ENCODE measurements at regions of chr5 and their contacts with region 1.

Region 1: DNA sequence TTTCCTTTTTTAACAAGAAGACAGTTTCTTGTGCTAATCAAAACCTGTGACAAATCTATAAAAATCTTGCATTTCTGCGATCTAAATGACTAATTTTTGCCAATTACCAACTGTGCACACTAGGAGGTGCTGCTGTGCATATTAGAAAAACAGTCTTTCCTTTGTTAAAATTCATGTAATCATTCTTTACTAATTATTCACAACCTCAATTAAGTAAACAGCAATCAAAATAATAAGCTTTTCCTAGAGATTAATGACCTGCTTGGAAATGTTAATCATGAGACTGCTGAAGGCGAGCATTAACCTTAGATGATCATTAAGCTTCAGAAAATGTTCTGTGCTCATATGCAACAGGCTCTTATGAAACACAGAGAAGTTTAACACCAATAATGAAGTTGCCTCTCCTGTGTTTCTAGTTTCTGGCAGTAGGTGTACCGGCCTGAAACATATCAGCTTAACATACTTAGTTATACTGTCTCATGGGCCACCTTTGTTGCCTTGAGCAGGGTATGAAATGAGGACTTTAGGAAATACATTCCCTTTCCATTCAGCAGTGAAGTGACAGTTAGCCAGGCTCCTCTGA is 17.7 kb downstream of the RFESD start:
- DNase-seq: peak; percentile 69
- H3K4me3 ChIP-seq: no peak overlapping the region
- CTCF ChIP-seq: peak; percentile 75

Region 2: GRCh38 chr5:95748133-95748532 is 83.8 kb after region 1 on chr5:
- in situ Hi-C with region 1: no loop called
- DNase-seq: no peak
- H3K4me3 ChIP-seq: no peak overlapping the region
- CTCF ChIP-seq: no peak

Region 3: GRCh38 chr5:95846554-95847260 is 182.4 kb after region 1 on chr5:
- in situ Hi-C with region 1: loop called (anchors 25 kb)
- DNase-seq: peak; percentile 75
- H3K4me3 ChIP-seq: no peak overlapping the region
- CTCF ChIP-seq: peak; percentile 90

Region 4: GRCh38 chr5:96336351-96336985 is 672.2 kb after region 1 on chr5:
- in situ Hi-C with region 1: loop called (anchors 25 kb)
- DNase-seq: peak; percentile 93
- H3K4me3 ChIP-seq: no peak overlapping the region
- CTCF ChIP-seq: peak; percentile 89